ENCODE measurements at regions of chr4 and their contacts with region 1.

Region 1: DNA sequence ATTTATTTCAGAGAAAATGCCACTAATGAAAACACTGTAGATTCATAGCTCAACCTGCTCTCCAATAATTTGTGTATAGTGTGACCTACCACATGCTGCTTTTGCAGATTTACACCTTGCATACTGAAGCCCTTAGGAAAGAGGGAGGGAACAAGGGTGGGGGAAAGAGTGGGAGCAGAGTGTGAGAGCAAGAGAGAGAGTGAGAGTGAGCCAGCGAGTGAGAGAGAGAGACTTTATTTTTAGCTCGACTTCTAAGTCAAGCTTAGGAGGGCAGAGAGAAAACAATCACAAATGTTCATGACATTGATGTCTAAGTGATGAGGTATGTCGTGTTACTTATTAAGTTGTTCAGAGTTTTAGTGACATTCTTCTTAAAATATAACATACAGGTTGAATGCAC is 112.5 kb upstream of the HAND2 start:
- DNase-seq: no peak
- ATAC-seq: peak; percentile 85

Region 2: DNA sequence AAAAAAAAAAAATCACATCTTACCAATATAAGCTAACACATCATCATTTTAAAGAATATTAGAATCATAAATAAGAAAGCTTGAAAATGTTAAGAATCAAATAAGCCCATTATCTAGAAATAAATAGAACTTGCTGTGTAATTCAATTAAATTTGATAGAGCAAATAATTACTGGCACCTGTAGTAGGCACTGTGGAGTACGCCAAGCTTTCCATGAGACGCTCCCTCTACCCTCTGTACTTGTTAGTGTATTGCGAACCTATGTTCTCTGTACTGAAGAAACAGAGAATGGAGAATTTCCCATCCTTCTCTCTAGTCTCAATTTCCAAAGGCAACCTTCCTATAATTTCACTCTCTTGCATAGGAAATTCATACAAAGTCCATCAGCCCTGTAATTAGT is 50.7 kb before region 1 on chr4:
- intact Hi-C with region 1: loop called (anchors 5 kb)
- DNase-seq: no peak
- ATAC-seq: no peak

Region 3: GRCh38 chr4:173722075-173722474 is 79.6 kb after region 1 on chr4:
- intact Hi-C with region 1: no loop called
- DNase-seq: no peak
- ATAC-seq: no peak